CD4-positive, alpha-beta T cell (primary cell): ENCODE measurements at regions of chr1 and their contacts with region 1.

Region 1: DNA sequence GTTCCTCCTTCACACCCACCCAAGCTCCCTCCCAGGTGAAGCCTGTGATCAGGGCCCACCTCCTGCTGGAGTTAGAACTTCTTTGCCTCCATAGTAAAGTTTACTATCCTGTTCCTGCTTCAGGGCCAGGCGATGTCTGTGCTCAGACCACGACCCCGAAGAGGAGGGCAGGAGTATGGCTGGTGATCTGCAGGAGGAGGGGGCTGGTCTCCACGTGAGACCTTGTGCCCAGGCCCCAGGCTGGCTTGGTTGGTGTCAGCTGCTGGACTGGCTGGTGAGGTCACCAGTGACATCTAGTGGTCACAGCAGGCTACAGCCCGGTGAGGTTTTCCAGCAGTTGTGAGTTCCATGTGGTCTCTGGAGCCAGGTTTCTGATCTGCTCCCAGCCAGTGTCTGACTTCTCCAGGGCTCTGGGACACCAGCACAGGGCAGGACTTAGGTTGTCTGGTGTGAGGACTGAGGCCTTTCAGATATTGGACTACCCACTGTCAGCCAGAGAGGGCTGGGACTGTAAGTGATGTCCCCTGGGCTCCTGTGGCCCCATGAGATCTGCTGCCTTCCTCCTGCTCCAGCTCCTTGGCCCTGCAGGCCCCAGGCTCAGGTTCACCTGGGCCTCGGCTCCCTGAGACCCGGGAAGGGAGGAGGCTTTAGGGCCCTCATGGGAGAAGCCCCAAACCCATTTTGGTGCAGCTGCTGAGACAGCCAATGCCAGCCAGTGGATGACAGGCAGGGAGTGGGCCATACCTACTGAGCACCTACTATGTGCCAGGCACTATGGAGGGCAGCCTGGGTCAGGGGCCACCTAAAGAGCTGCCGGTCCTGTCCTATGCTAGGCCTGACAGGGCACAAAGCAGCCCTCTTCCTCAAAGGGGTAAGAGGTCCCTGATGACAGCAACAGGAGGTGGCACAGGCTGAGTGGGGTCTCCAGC is 6.0 kb upstream of the UBL4B start:
- DNase-seq: peak; percentile 34 to 77 (median 44)
- ATAC-seq: peak; percentile 81
- H3K4me3 ChIP-seq: no peak overlapping the region
- H3K4me3 Mint-ChIP-seq: no peak overlapping the region
- H3K27ac ChIP-seq: no peak overlapping the region
- H3K27ac Mint-ChIP-seq: no peak overlapping the region
- H3K4me1 ChIP-seq: peaks cover 6% of the 10 kb centered on the region
- H3K4me1 Mint-ChIP-seq: no peaks in the 10 kb centered on the region
- H3K27me3 ChIP-seq: peaks cover 0 to 3% of the 10 kb centered on the region in 2 experiments
- H3K27me3 Mint-ChIP-seq: peaks cover 10% of the 10 kb centered on the region
- CTCF ChIP-seq: peak; percentile 88

Region 2: DNA sequence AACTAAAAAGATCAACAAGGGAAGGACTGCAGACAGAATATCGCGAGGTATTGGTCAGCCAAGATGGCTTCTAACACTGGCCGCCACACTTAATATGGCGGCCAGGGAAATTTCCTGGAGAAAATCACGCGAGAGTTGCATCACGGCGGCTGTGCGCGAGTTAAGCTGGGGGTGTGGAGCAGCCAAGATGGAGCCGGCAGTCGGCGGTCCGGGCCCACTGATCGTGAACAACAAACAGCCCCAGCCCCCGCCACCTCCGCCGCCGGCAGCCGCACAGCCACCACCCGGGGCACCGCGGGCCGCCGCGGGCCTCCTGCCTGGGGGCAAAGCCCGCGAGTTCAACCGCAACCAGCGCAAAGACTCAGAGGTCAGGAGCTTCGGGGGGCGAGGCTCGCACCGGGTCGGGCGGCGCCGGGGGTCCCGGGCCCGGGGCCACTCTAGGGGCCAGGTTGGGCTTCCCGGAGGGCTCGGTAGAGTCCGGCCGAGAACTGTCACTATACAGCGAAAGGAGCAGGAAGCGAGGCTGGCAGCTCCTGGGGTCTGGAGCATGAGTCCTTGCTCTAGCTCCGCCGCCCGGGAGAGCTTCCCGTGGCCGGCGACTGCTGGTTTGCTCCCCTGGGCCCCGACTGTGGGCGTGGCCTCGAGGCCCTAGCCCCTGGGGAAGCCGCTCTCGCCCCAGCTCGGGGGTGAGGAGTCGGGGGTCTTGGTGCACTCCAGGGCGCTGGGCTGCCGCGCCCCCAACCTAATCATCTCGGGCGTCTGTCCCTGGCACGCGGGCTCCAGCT is 71.6 kb before region 1 on chr1 and contains the start of gene STRIP1:
- CTCF ChIA-PET with region 1: no interaction called
- POLR2A ChIA-PET with region 1: no interaction called
- intact Hi-C with region 1: loop called in 1 of 2 experiments (anchors 2 kb)
- DNase-seq: peak; percentile 85 to 98 (median 89)
- ATAC-seq: peak; percentile 95
- H3K4me3 ChIP-seq: peak within 1 kb of the TSS; percentile 84
- H3K4me3 Mint-ChIP-seq: peak within 1 kb of the TSS; percentile 98
- H3K27ac ChIP-seq: peak within 1 kb of the TSS; percentile 37 to 64
- H3K27ac Mint-ChIP-seq: peak within 1 kb of the TSS; percentile 81
- H3K4me1 ChIP-seq: peaks cover 41% of the 10 kb centered on the region
- H3K4me1 Mint-ChIP-seq: peaks cover 56% of the 10 kb centered on the region
- H3K27me3 ChIP-seq: no peaks in the 10 kb centered on the region
- H3K27me3 Mint-ChIP-seq: no peaks in the 10 kb centered on the region
- CTCF ChIP-seq: no peak
- total RNA-seq, gene STRIP1: 74.3 to 80.9 TPM

Region 3: DNA sequence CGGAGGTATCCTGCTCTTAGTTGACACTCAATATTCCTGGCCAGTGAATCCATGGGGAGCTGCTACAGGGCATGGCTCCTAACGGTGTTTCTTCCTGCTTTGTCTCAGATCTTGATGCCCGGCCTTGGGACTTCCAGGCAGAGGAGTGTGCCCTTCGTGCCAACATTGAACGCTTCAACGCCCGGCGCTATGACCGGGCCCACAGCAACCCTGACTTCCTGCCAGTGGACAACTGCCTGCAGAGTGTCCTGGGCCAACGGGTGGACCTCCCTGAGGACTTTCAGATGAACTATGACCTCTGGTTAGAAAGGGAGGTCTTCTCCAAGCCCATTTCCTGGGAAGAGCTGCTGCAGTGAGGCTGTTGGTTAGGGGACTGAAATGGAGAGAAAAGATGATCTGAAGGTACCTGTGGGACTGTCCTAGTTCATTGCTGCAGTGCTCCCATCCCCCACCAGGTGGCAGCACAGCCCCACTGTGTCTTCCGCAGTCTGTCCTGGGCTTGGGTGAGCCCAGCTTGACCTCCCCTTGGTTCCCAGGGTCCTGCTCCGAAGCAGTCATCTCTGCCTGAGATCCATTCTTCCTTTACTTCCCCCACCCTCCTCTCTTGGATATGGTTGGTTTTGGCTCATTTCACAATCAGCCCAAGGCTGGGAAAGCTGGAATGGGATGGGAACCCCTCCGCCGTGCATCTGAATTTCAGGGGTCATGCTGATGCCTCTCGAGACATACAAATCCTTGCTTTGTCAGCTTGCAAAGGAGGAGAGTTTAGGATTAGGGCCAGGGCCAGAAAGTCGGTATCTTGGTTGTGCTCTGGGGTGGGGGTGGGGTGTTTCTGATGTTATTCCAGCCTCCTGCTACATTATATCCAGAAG is 52.5 kb before region 1 on chr1:
- CTCF ChIA-PET with region 1: interaction called, 3 read pairs
- POLR2A ChIA-PET with region 1: no interaction called
- intact Hi-C with region 1: loop called (anchors 1 kb)
- DNase-seq: peak; percentile 37 to 79 (median 64)
- ATAC-seq: peak; percentile 87
- H3K4me3 ChIP-seq: no peak overlapping the region
- H3K4me3 Mint-ChIP-seq: no peak overlapping the region
- H3K27ac ChIP-seq: no peak overlapping the region
- H3K27ac Mint-ChIP-seq: no peak overlapping the region
- H3K4me1 ChIP-seq: no peaks in the 10 kb centered on the region
- H3K4me1 Mint-ChIP-seq: peaks cover 5% of the 10 kb centered on the region
- H3K27me3 ChIP-seq: no peaks in the 10 kb centered on the region
- H3K27me3 Mint-ChIP-seq: no peaks in the 10 kb centered on the region
- CTCF ChIP-seq: peak; percentile 89

Region 4: GRCh38 chr1:110065841-110066240 is 40.4 kb before region 1 on chr1:
- CTCF ChIA-PET with region 1: no interaction called
- POLR2A ChIA-PET with region 1: no interaction called
- intact Hi-C with region 1: no loop called
- DNase-seq: no peak
- ATAC-seq: no peak
- H3K4me3 ChIP-seq: no peak overlapping the region
- H3K4me3 Mint-ChIP-seq: no peak overlapping the region
- H3K27ac ChIP-seq: no peak overlapping the region
- H3K27ac Mint-ChIP-seq: no peak overlapping the region
- H3K4me1 ChIP-seq: peaks cover 31% of the 10 kb centered on the region
- H3K4me1 Mint-ChIP-seq: peaks cover 17% of the 10 kb centered on the region
- H3K27me3 ChIP-seq: peaks cover 33 to 39% of the 10 kb centered on the region in 2 experiments
- H3K27me3 Mint-ChIP-seq: peaks cover 51% of the 10 kb centered on the region
- CTCF ChIP-seq: no peak

Region 5: DNA sequence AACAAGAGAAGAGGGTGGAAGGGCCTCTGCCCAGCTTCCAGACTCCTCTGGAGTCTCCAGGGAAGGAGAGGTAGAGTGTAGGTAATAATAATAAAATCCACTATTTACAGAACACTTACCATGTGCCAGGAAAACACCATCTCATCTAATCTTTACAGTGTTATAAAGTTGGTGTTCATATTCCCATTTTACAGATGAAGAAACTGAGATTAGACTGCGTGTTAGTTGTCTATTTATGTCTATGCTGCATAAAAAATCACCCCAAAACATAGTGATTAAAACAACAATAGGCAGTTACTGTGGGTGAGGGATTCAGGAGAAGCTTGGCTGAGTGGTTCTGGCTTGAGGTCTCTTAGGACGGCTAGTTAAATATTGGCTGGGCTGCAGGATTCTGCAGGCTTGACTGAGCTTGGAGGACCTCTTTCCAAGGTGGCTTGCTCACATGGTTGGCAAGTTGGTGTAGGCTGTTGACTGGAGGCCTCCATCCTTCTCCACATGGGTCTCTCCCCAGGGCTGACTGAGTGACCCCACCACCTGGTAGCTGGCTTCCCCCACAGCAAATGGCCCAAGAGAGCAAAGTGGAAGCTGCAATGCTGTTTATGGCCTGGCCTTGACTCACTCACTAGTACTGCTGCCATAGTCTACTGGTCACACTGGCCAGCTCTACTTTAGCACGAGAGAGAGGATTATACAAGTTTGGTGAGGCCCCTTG is 29.3 kb before region 1 on chr1:
- CTCF ChIA-PET with region 1: no interaction called
- POLR2A ChIA-PET with region 1: no interaction called
- intact Hi-C with region 1: no loop called
- DNase-seq: no peak
- ATAC-seq: no peak
- H3K4me3 ChIP-seq: no peak overlapping the region
- H3K4me3 Mint-ChIP-seq: no peak overlapping the region
- H3K27ac ChIP-seq: no peak overlapping the region
- H3K27ac Mint-ChIP-seq: no peak overlapping the region
- H3K4me1 ChIP-seq: no peaks in the 10 kb centered on the region
- H3K4me1 Mint-ChIP-seq: no peaks in the 10 kb centered on the region
- H3K27me3 ChIP-seq: peaks cover 10 to 25% of the 10 kb centered on the region in 2 experiments
- H3K27me3 Mint-ChIP-seq: peaks cover 87% of the 10 kb centered on the region
- CTCF ChIP-seq: no peak

Region 6: DNA sequence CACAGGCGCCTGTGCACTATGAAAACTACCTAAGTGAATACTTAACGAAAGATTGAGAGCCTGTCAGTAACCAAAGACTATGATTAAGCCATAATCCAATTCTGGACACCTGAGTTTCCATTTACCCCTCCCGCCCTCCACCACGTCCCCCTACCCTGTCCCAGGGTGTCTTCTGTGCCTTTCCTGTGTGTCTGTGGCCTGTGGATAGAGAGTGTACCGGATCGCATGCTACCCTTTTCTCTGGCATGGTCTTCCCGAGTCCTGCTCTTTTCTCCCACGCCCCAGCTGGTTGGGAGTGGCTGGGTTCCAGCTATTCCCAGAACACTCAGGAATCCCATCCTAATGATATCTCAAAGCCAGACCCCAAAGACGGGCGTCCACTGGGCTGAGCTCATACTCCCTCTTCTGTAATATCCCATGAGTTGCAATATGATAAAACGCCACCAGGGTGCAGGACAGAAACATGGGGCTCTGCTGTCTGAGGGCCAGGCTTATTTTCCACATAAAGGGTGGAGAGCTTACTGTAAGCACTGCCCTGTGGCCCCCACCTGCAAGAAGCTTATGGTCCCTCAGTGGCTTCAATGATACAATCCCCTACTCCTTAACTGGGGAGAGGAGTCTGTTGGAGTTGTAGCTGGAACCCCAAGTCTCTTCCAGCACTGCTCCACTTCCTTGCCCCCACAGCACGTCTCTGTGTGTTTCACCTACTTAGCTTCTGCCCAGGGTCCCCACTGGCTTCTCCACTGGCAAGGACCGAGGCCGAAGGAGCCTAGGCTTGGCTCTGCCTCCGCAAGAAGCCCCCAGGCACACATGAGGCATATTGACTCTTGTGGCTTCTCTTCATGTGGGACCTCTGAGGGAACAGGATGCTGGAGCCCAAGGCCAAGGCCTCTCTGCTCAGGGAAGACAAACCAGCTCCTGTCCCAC is 18.2 kb before region 1 on chr1:
- CTCF ChIA-PET with region 1: interaction called, 10 read pairs
- POLR2A ChIA-PET with region 1: no interaction called
- intact Hi-C with region 1: no loop called
- DNase-seq: peak in 9 of 14 experiments; percentile 18 to 70 (median 33)
- ATAC-seq: peak; percentile 73
- H3K4me3 ChIP-seq: no peak overlapping the region
- H3K4me3 Mint-ChIP-seq: peak overlapping the region; percentile 36
- H3K27ac ChIP-seq: no peak overlapping the region
- H3K27ac Mint-ChIP-seq: no peak overlapping the region
- H3K4me1 ChIP-seq: peaks cover 19% of the 10 kb centered on the region
- H3K4me1 Mint-ChIP-seq: peaks cover 6% of the 10 kb centered on the region
- H3K27me3 ChIP-seq: peaks cover 26 to 32% of the 10 kb centered on the region in 2 experiments
- H3K27me3 Mint-ChIP-seq: peaks cover 53% of the 10 kb centered on the region
- CTCF ChIP-seq: peak; percentile 60